ENCODE measurements at regions of chr7 and their contacts with region 1.

Region 1: DNA sequence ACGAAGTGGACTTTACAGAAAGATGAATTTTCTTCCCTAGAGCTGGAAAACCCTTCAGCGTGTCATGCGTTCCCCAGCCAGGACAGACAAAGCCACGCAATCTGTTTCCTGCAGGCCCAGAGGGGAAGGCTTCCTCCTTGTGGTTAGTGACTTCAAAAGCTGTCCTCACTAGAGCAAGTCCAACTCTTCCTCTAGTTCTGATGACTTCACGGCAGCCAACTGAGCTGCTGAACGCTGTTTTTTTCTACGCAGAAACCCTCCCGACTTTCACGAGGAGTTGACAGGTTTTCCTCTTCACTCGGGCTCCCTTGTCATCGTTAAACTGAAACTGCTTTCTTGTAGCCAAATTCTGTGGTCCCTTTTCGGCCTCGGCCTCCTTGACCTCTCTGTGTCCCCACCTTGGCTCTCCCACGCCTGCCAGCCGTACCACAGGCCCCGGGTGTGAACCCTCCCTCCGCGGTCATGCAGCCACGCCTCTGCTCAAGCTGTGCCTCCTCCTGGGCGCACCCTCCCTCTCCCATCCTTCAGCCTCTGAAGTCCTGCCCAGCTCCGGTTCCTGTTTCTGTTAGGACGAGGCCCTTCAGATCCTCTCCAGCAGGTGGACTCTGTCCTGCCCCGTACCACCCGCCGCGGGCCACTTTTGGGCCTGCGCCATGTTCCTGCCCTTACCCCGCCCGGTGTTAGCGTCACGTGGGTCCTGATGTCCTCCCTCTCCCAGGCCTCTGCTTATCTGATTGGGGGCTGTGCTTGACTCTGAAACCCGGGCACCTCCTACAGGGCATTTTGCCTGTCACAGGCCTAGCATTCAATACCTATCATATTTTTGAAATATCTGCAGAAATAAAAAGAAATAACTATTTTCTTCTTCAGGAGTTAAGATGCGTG is 39.3 kb downstream of the CUX1 start:
- DNase-seq: peak; percentile 99
- ATAC-seq: peak; percentile 98
- H3K4me3 ChIP-seq: peak overlapping the region; percentile 34
- H3K27ac ChIP-seq: peak overlapping the region; percentile 87 to 94
- H3K4me1 ChIP-seq: peaks cover 77% of the 10 kb centered on the region
- CTCF ChIP-seq: peak; percentile 40; the same call in 2 of the 3 replicates
- EP300 ChIP-seq: 0 out of 5 replicates have a peak, but pooled peaks of 1 of the 2 experiments have one; percentile 22
- POLR2A ChIP-seq: no peak
- RAD21 ChIP-seq: peak; percentile 47 to 70; a peak in 4 of 5 replicates

Region 2: GRCh38 chr7:101870351-101871062 is 13.8 kb after region 1 on chr7:
- CTCF ChIA-PET with region 1: interaction called, 40 read pairs
- POLR2A ChIA-PET with region 1: no interaction called
- DNase-seq: peak; percentile 32 to 78
- ATAC-seq: peak; percentile 81 to 82
- H3K4me3 ChIP-seq: no peak overlapping the region
- H3K27ac ChIP-seq: peak overlapping the region; percentile 58 to 69
- H3K4me1 ChIP-seq: peaks cover 63% of the 10 kb centered on the region
- CTCF ChIP-seq: peak; percentile 17; the same call in 1 of the 3 replicates
- EP300 ChIP-seq: no peak
- POLR2A ChIP-seq: no peak
- RAD21 ChIP-seq: peak in 1 of 2 experiments; percentile 25; a peak in 1 of 5 replicates

Region 3: GRCh38 chr7:101882595-101883564 is 26.2 kb after region 1 on chr7:
- CTCF ChIA-PET with region 1: interaction called, 23 read pairs
- POLR2A ChIA-PET with region 1: interaction called, 9 read pairs
- DNase-seq: peak; percentile 96 to 100
- ATAC-seq: peak; percentile 92 to 94
- H3K4me3 ChIP-seq: 0 out of 3 replicates have a peak overlapping the region, but pooled peaks have one; percentile 4
- H3K27ac ChIP-seq: peak overlapping the region; percentile 96
- H3K4me1 ChIP-seq: peaks cover 89% of the 10 kb centered on the region
- CTCF ChIP-seq: peak; percentile 19; the same call in 2 of the 3 replicates
- EP300 ChIP-seq: peak; percentile 99 to 100
- POLR2A ChIP-seq: no peak
- RAD21 ChIP-seq: peak in 1 of 2 experiments; percentile 40; a peak in 4 of 5 replicates

Region 4: GRCh38 chr7:102132209-102132752 is 275.6 kb after region 1 on chr7:
- CTCF ChIA-PET with region 1: no interaction called
- POLR2A ChIA-PET with region 1: no interaction called
- DNase-seq: peak in 1 of 2 experiments; percentile 68
- ATAC-seq: no peak
- H3K4me3 ChIP-seq: no peak overlapping the region
- H3K27ac ChIP-seq: peak overlapping the region; percentile 91 to 93
- H3K4me1 ChIP-seq: peaks cover 85% of the 10 kb centered on the region
- CTCF ChIP-seq: no peak
- EP300 ChIP-seq: peak in 1 of 2 experiments; percentile 28; a peak in 1 of 5 replicates
- POLR2A ChIP-seq: no peak
- RAD21 ChIP-seq: no peak

Measured in A549 (cell line).